Adrenal gland (tissue), 19 donors: ENCODE measurements at regions of chr11 and their contacts with region 1.

Region 1: DNA sequence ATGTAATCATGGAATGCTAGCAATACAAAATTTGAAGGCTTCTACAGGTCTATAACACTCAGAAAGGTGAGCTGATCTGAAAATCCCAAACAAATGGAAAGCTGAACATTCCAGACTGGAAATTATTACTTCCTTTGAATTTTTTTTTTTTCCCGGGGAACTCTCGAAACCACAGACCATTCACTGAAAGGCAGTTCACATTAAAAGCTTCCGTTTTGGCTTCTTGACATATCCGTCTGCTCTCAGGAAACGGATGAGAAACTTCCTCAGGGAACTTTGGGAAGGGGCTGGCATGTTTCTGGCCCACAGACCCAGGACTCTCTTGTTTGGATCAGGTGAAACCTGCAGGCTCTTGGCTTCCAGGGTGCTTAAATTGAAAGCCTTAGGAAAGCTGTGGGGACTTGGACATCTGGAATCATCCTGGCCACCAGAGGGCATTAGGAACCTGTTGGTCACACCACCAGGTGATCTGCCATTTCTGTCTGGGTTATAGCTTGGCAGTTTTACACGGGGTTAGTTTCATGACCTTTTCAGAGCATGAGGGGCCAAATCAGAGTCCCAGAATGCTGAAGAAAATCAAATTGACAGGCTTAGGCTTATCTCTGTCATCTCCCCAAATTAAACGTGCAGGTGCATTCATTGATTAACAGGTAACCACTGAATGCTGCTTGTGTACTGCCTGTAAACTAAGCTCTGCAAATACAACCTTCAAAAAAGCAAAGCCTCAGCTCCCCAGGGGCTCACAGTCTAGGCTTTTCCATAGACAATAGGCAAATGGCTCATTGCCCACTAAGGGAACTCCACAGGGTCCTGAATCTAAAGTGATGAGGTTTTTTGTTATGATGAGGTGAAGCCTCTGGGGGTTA is 22.7 kb upstream of the GRAMD1B start:
- DNase-seq: peak; percentile 81 to 92 (median 86)
- H3K4me3 ChIP-seq: no peak overlapping the region
- H3K27ac ChIP-seq: peak overlapping the region in 2 of 5 donors; percentile 25 to 36
- H3K4me1 ChIP-seq: peaks cover 10 to 26% of the 10 kb centered on the region in 2 donors
- H3K27me3 ChIP-seq: no peaks in the 10 kb centered on the region
- CTCF ChIP-seq: peak; percentile 57 to 86 (median 84)
- POLR2A ChIP-seq: no peak

Region 2: DNA sequence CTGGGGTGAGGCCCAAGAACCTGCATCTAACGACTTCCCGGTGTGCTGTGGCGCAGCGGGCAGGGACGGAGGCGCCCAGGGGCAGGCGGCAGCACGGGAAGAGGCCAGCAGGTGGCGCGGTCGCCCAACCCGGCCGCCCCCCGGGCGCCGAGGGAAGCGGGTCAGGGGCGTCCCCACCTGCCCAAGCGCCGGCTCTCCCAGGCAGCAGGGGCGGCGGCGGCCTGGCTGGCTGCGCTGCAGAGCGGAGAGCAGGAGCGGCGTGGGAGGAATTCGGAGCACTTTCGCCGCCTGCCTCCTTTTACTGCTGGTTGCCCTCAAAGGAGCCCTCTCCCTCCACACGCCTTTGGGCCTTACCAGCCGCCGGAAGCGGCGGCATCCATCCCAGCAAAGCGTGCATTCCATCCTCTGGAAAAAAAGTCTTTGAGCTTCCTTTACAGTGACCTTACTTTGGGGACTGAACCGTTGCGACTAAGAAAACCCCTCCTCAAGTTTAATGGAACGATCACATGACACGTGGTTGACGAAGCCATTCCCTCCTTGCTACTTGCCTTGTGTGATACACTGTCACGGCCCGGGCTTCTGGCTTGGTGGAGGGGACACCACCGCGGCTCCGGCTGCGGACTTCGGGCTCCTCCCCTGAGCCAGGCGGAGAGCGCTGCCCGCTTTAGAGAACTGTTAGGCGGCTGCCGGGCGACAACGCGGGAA is 105.5 kb before region 1 on chr11:
- intact Hi-C with region 1: loop called in 1 of 2 experiments (anchors 10 kb)
- DNase-seq: peak; percentile 51 to 77 (median 72)
- H3K4me3 ChIP-seq: peak overlapping the region in 2 of 4 donors; percentile 26 to 53
- H3K27ac ChIP-seq: peak overlapping the region in 3 of 5 donors; percentile 9 to 73 (median 54)
- H3K4me1 ChIP-seq: peaks cover 0 to 16% of the 10 kb centered on the region in 2 donors
- H3K27me3 ChIP-seq: no peaks in the 10 kb centered on the region
- CTCF ChIP-seq: peak; percentile 51 to 95 (median 79)
- POLR2A ChIP-seq: no peak

Region 3: GRCh38 chr11:123351375-123351774 is 56.0 kb before region 1 on chr11:
- intact Hi-C with region 1: no loop called
- DNase-seq: peak in 4 of 7 donors; percentile 13 to 62 (median 28)
- H3K4me3 ChIP-seq: no peak overlapping the region
- H3K27ac ChIP-seq: no peak overlapping the region
- H3K4me1 ChIP-seq: no peaks in the 10 kb centered on the region
- H3K27me3 ChIP-seq: no peaks in the 10 kb centered on the region
- CTCF ChIP-seq: no peak
- POLR2A ChIP-seq: no peak

Region 4: GRCh38 chr11:123434262-123434661 is 26.9 kb after region 1 on chr11:
- intact Hi-C with region 1: no loop called
- DNase-seq: peak in 3 of 7 donors; percentile 54 to 60 (median 57)
- H3K4me3 ChIP-seq: no peak overlapping the region
- H3K27ac ChIP-seq: peak overlapping the region in 3 of 5 donors; percentile 35 to 69 (median 61)
- H3K4me1 ChIP-seq: peaks cover 17 to 34% of the 10 kb centered on the region in 2 donors
- H3K27me3 ChIP-seq: no peaks in the 10 kb centered on the region
- CTCF ChIP-seq: peak; percentile 14 to 49 (median 40)
- POLR2A ChIP-seq: no peak